K562 (cell line): ENCODE measurements at regions of chr5 and their contacts with region 1.

Region 1: GRCh38 chr5:61933787-61934626 is 372.0 kb upstream of the KIF2A start:
- DNase-seq: peak; percentile 14 to 57 (median 26)
- ATAC-seq: peak; percentile 75
- H3K4me3 ChIP-seq: no peak overlapping the region
- H3K27ac ChIP-seq: no peak overlapping the region
- H3K4me1 ChIP-seq: no peaks in the 10 kb centered on the region
- H3K27me3 ChIP-seq: no peaks in the 10 kb centered on the region
- CTCF ChIP-seq: peak; percentile 55 to 70 (median 62)
- EP300 ChIP-seq: no peak
- POLR2A ChIP-seq: no peak
- RAD21 ChIP-seq: peak; percentile 69 to 79

Region 2: DNA sequence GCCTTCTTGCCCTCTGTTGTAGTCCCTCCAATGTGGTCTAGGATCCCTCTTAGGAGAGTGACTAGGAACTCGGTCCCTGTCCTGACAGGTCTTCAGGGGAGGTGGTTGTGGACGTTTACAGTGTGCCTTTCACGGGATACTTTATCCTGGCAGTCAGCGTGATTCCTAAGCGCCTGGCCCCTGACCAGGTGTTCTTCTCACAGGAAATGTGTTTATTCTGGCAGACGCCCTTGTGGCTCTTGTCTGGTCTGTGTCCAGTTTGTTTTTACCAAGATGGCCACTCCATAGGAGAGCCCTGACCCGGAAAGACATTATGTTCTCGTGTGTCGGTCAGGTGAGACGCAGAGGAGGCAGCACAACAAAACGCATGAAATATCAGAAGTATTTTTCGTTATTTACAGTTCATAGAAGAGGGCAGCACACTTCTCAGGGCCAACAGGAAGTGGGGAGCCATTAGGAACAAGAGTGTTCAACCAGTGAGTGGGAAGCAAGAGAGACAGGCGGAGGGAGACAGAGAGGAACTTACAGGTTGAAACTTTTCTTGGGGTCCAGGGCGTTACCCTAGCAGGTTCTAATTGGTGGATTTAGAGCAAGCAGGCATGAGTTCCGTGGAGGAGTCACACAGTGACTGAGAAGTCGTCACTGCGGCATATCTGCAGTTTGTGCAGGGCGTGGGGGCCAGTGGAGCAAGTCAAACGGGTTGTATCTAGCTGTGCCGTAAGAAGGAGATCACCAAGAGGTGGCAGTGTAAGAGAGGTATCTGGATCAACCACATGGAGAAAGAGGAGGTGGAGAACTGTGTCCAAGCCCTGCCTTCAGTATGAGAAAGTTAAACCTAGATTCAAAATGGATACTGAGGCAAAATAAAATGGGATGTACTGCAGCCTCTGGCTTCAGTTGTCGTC is 189.1 kb before region 1 on chr5:
- CTCF ChIA-PET with region 1: no interaction called
- POLR2A ChIA-PET with region 1: no interaction called
- in situ Hi-C with region 1: no loop called
- intact Hi-C with region 1: loop called (anchors 10 kb)
- DNase-seq: peak in 2 of 4 experiments; percentile 15 to 19
- ATAC-seq: peak; percentile 85
- H3K4me3 ChIP-seq: no peak overlapping the region
- H3K27ac ChIP-seq: no peak overlapping the region
- H3K4me1 ChIP-seq: no peaks in the 10 kb centered on the region
- H3K27me3 ChIP-seq: peaks cover 0 to 4% of the 10 kb centered on the region in 2 experiments; a peak in 1 of 5 replicates
- CTCF ChIP-seq: peak in 2 of 3 experiments; percentile 24 to 29; a peak in 2 of 6 replicates
- EP300 ChIP-seq: no peak
- POLR2A ChIP-seq: no peak
- RAD21 ChIP-seq: no peak

Region 3: GRCh38 chr5:61981886-61982285 is 47.9 kb after region 1 on chr5:
- CTCF ChIA-PET with region 1: no interaction called
- POLR2A ChIA-PET with region 1: no interaction called
- in situ Hi-C with region 1: no loop called
- intact Hi-C with region 1: no loop called
- DNase-seq: peak in 1 of 4 experiments; percentile 2
- ATAC-seq: no peak
- H3K4me3 ChIP-seq: no peak overlapping the region
- H3K27ac ChIP-seq: no peak overlapping the region
- H3K4me1 ChIP-seq: no peaks in the 10 kb centered on the region
- H3K27me3 ChIP-seq: no peaks in the 10 kb centered on the region
- CTCF ChIP-seq: no peak
- EP300 ChIP-seq: no peak
- POLR2A ChIP-seq: no peak
- RAD21 ChIP-seq: no peak

Region 4: DNA sequence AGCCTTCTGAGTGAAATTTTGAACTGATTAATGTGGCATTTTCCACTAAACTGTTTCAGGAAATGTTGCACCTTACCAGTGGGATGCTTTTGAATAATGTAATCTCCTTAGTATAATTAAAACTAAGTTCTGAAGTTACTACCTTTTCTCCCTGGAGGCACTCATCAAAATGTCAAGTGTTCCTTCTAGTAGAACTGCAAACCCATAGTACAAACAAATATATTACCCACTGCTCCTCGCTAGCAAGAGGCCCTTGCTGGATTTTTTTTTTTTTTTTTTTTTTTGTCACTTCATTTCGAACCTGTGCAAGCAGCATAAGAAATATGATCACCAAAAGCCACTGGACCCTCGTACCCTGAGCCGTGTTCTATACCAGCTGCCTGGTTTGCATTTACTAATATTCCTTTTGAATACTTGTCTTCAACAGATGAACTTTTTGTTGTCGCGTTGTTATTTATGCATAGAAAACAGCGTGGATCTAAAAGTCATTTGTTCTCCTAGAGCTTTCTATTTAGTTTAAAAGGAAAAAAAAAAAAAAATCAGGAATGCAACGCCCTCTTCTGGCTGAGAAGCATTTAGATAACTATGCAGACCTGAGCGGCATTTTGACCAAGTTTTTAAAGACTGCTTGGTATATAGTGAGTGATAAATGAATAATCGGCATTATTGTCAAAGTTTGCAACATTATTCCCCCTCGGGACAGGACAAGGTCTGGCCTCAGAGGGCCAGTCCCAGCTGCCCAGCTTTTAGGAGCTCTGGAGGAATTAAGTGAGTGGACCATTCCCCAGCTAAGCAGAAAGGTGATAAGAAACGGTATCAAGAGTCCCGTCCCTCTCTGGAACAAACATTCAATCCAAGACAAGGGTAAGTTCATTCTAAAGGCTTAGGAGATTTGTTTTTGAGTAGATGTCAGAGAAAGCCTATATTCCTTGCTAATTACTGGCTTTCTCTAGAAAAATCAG is 209.5 kb after region 1 on chr5:
- CTCF ChIA-PET with region 1: no interaction called
- POLR2A ChIA-PET with region 1: no interaction called
- in situ Hi-C with region 1: no loop called
- intact Hi-C with region 1: loop called (anchors 10 kb)
- DNase-seq: peak in 1 of 4 experiments; percentile 38
- ATAC-seq: peak; percentile 83
- H3K4me3 ChIP-seq: no peak overlapping the region
- H3K27ac ChIP-seq: no peak overlapping the region
- H3K4me1 ChIP-seq: no peaks in the 10 kb centered on the region
- H3K27me3 ChIP-seq: peaks cover 0 to 6% of the 10 kb centered on the region in 2 experiments; a peak in 2 of 5 replicates
- CTCF ChIP-seq: peak; percentile 16 to 62 (median 59); a peak in 5 of 6 replicates
- EP300 ChIP-seq: no peak
- POLR2A ChIP-seq: no peak
- RAD21 ChIP-seq: peak; percentile 39 to 61